PC-9 (cell line): ENCODE measurements at regions of chr1 and their contacts with region 1.

Region 1: GRCh38 chr1:167220537-167221125 is at the start of gene POU2F1:
- DNase-seq: peak; percentile 92 to 98
- H3K4me3 ChIP-seq: peak within 1 kb of the TSS; percentile 70
- H3K27ac ChIP-seq: peak within 1 kb of the TSS; percentile 92
- H3K4me1 ChIP-seq: peaks cover 34% of the 10 kb centered on the region
- H3K27me3 ChIP-seq: no peaks in the 10 kb centered on the region
- CTCF ChIP-seq: peak; percentile 76
- total RNA-seq, gene POU2F1: 16.6 and 28.5 TPM in 2 replicates

Region 2: GRCh38 chr1:166785987-166786386 is 434.6 kb before region 1 on chr1:
- CTCF ChIA-PET with region 1: no interaction called
- POLR2A ChIA-PET with region 1: no interaction called
- intact Hi-C with region 1: no loop called
- DNase-seq: no peak
- H3K4me3 ChIP-seq: no peak overlapping the region
- H3K27ac ChIP-seq: no peak overlapping the region
- H3K4me1 ChIP-seq: no peaks in the 10 kb centered on the region
- H3K27me3 ChIP-seq: peaks cover 29% of the 10 kb centered on the region
- CTCF ChIP-seq: 0 out of 2 replicates have a peak, but pooled peaks have one; percentile 17

Region 3: GRCh38 chr1:166902271-166902670 is 318.4 kb before region 1 on chr1:
- CTCF ChIA-PET with region 1: interaction called, 14 read pairs
- POLR2A ChIA-PET with region 1: interaction called, 3 read pairs
- intact Hi-C with region 1: no loop called
- DNase-seq: peak in 1 of 2 experiments; percentile 47
- H3K4me3 ChIP-seq: no peak overlapping the region
- H3K27ac ChIP-seq: no peak overlapping the region
- H3K4me1 ChIP-seq: peaks cover 18% of the 10 kb centered on the region
- H3K27me3 ChIP-seq: no peaks in the 10 kb centered on the region
- CTCF ChIP-seq: no peak

Region 4: GRCh38 chr1:167082511-167083027 is 138.1 kb before region 1 on chr1:
- CTCF ChIA-PET with region 1: interaction called, 19 read pairs
- POLR2A ChIA-PET with region 1: interaction called, 3 read pairs
- intact Hi-C with region 1: loop called (anchors 1 kb)
- DNase-seq: peak; percentile 70 to 93
- H3K4me3 ChIP-seq: peak overlapping the region; percentile 27; the same call in 1 of the 2 replicates
- H3K27ac ChIP-seq: peak overlapping the region; percentile 87
- H3K4me1 ChIP-seq: peaks cover 40% of the 10 kb centered on the region
- H3K27me3 ChIP-seq: no peaks in the 10 kb centered on the region
- CTCF ChIP-seq: no peak

Region 5: GRCh38 chr1:167121375-167122120 is 99.1 kb before region 1 on chr1:
- CTCF ChIA-PET with region 1: interaction called, 11 read pairs
- POLR2A ChIA-PET with region 1: interaction called, 7 read pairs
- intact Hi-C with region 1: loop called (anchors 1 kb)
- DNase-seq: peak; percentile 76 to 88
- H3K4me3 ChIP-seq: peak overlapping the region; percentile 91
- H3K27ac ChIP-seq: peak overlapping the region; percentile 59
- H3K4me1 ChIP-seq: peaks cover 18% of the 10 kb centered on the region; the same call in 1 of the 2 replicates
- H3K27me3 ChIP-seq: no peaks in the 10 kb centered on the region
- CTCF ChIP-seq: no peak

Region 6: GRCh38 chr1:167173516-167174184 is 47.0 kb before region 1 on chr1:
- CTCF ChIA-PET with region 1: interaction called, 10 read pairs
- POLR2A ChIA-PET with region 1: interaction called, 4 read pairs
- intact Hi-C with region 1: no loop called
- DNase-seq: peak; percentile 11 to 55
- H3K4me3 ChIP-seq: peak overlapping the region; percentile 32; the same call in 1 of the 2 replicates
- H3K27ac ChIP-seq: peak overlapping the region; percentile 71
- H3K4me1 ChIP-seq: peaks cover 80% of the 10 kb centered on the region
- H3K27me3 ChIP-seq: no peaks in the 10 kb centered on the region
- CTCF ChIP-seq: no peak

Region 7: GRCh38 chr1:167196166-167196565 is 24.5 kb before region 1 on chr1:
- CTCF ChIA-PET with region 1: no interaction called
- POLR2A ChIA-PET with region 1: no interaction called
- intact Hi-C with region 1: no loop called
- DNase-seq: no peak
- H3K4me3 ChIP-seq: no peak overlapping the region
- H3K27ac ChIP-seq: peak overlapping the region; percentile 65
- H3K4me1 ChIP-seq: peaks cover 14% of the 10 kb centered on the region
- H3K27me3 ChIP-seq: no peaks in the 10 kb centered on the region
- CTCF ChIP-seq: no peak

Region 8: GRCh38 chr1:167442124-167442848 is 221.7 kb after region 1 on chr1:
- CTCF ChIA-PET with region 1: no interaction called
- POLR2A ChIA-PET with region 1: interaction called, 6 read pairs
- intact Hi-C with region 1: loop called (anchors 1 kb)
- DNase-seq: peak; percentile 92
- H3K4me3 ChIP-seq: 0 out of 2 replicates have a peak overlapping the region, but pooled peaks have one; percentile 3
- H3K27ac ChIP-seq: peak overlapping the region; percentile 52
- H3K4me1 ChIP-seq: peaks cover 21% of the 10 kb centered on the region
- H3K27me3 ChIP-seq: no peaks in the 10 kb centered on the region
- CTCF ChIP-seq: peak; percentile 91

Region 9: GRCh38 chr1:167524651-167525050 is 304.0 kb after region 1 on chr1:
- CTCF ChIA-PET with region 1: no interaction called
- POLR2A ChIA-PET with region 1: no interaction called
- intact Hi-C with region 1: no loop called
- DNase-seq: no peak
- H3K4me3 ChIP-seq: no peak overlapping the region
- H3K27ac ChIP-seq: no peak overlapping the region
- H3K4me1 ChIP-seq: no peaks in the 10 kb centered on the region
- H3K27me3 ChIP-seq: no peaks in the 10 kb centered on the region
- CTCF ChIP-seq: no peak

Region 10: DNA sequence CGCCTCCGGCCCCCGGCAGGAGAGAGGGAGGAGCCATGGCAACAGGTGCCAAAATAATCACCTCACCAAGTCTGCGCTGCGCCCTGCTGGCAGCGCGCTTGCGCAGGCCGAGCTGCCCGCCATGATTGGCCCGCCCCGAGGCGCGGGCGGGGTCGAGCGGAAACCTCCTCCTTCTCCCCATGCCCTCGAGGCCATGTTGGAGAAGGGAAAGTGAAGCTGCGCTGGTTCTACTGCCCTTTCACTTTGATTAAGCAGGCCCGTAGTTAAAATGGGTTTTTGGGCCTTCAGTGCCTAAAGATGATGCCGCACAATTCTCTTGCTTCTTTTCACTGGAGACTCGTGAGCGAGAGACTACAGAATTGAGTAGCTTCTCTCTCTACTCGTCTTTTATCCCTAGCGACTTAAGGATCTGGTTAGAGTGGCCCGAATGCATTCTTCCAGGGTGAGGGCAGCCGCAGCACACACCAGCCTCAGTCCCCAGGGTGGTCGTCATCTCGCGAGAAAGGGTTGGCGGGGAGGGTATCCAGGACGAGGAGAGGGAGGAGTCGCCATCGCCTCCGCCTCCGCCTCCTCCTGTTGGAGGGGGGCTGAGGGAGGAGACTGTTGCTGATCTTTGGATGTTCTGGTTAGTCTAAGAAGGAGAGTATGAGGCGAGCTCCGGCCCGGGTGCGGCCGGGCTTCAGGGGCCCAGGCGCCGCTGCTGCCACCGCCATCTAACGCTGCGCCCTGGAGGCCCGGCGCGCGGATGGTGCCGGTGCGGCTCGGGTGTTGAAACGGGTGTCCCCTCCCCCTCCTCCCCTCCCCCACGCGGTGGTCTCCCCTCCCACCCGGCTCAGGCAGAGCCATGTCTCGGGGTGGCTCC is 715.7 kb after region 1 on chr1 and contains the start of gene DCAF6:
- CTCF ChIA-PET with region 1: no interaction called
- POLR2A ChIA-PET with region 1: interaction called, 5 read pairs
- intact Hi-C with region 1: loop called (anchors 10 kb)
- DNase-seq: peak; percentile 93 to 97
- H3K4me3 ChIP-seq: peak within 1 kb of the TSS; percentile 82
- H3K27ac ChIP-seq: peak within 1 kb of the TSS; percentile 94
- H3K4me1 ChIP-seq: peaks cover 36% of the 10 kb centered on the region
- H3K27me3 ChIP-seq: no peaks in the 10 kb centered on the region
- CTCF ChIP-seq: no peak
- total RNA-seq, gene DCAF6: 51.8 and 77.4 TPM in 2 replicates